Left cardiac atrium (tissue), 4 donors: ENCODE measurements at regions of chr5 and their contacts with region 1.

Region 1: GRCh38 chr5:151164686-151165392 is 7.3 kb upstream of the ANXA6 start:
- DNase-seq: peak; percentile 69
- ATAC-seq: peak; percentile 86 to 92

Region 2: DNA sequence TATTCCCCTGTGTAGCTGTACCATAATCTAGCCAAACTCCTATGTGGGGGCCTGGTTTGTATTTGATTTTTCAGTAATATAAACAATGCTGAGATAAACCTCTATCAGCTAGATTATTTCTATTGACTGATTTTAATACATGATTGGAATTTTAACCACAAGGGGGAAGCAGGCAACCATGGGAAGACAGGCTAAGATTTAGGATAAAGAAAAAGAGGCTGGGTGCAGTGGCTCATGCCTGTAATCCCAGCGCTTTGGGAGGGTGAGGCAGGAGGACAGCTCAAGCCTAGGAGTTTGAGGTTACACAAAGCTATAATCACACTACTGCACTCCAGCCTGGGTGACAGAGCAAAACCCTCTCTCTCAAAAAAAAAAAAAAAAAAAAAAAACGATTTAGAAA is 162.6 kb before region 1 on chr5:
- intact Hi-C with region 1: loop called in 1 of 2 experiments (anchors 5 kb)
- DNase-seq: no peak
- ATAC-seq: peak in 1 of 2 donors; percentile 7

Region 3: DNA sequence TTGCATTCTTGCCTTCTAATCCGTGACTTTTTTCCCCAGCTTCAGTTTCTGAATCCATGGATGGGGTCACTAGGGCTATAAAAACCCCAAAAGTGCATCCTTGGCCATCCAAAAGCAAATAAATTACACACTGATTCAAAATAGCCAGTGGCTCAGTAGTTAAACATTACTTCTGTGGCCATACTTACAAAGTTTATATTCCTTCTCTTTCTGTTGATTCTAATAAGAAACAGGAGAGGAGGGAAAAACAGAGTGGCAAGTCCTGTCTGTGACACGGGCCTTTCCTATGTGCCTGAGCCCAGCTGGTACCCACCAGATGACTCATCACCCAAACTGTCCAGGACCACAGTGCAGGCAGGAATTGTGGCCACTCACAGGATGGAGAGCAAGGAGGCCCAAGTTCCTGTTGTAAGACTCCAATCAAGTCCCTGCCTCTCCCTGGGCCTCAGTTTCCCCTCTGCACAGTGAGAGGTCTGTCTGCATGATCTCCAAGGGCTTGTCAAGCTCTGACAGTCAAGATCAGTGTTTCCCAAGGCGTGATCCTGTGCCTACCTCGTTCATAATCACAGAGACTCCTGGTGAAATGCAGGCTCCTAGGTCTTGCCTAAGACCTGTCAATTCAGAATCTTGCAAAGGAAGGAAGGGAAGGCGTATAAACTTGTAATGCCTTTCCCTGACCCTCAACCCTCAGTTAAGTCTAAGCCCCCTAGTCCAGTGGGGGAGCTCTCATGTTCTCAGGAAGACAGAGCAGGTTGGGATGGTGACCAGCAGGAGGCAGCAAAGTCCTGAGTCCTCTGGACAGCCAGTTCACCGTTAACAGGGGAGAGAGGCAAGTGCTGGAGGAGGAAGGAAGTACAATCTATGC is 113.5 kb before region 1 on chr5:
- intact Hi-C with region 1: loop called in 1 of 2 experiments (anchors 5 kb)
- DNase-seq: peak; percentile 88
- ATAC-seq: peak; percentile 84 to 85

Region 4: GRCh38 chr5:151126199-151126645 is 38.6 kb before region 1 on chr5:
- intact Hi-C with region 1: loop called (anchors 1 to 5 kb)
- DNase-seq: peak; percentile 77
- ATAC-seq: peak; percentile 69

Region 5: DNA sequence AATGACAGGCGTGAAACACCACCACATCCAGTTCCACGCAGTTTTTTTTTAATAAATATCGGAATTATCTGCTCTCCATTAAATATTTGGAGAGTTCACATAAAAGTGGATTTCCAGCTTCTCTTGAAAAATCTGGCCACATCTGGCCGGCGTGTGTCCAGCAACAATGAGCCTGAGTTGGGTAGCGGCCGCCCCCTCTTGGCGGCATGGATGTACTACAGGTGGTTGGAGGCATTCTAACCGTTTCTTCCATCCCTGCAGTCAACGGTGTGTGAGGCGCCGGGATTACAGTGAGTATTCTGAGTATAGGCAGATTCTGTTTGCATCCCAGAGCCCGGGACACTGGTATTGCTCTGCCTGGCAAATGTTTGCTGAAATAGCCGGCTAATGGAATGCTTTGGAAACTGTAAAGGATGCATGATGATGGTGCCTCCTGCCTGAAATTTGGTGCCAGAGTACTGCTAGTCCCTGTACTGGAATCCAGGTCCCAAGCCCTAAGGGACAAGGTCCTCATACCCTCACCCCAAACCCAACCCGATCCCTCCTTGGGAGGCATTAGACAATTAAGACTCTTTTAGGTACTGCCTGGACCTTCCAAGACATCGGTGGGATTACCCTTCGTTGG is 74.5 kb after region 1 on chr5:
- intact Hi-C with region 1: loop called in 1 of 2 experiments (anchors 2 kb)
- DNase-seq: peak; percentile 85
- ATAC-seq: peak in 1 of 2 donors; percentile 75